Stomach (tissue), 19 donors: ENCODE measurements at regions of chr20 and their contacts with region 1.

Region 1: DNA sequence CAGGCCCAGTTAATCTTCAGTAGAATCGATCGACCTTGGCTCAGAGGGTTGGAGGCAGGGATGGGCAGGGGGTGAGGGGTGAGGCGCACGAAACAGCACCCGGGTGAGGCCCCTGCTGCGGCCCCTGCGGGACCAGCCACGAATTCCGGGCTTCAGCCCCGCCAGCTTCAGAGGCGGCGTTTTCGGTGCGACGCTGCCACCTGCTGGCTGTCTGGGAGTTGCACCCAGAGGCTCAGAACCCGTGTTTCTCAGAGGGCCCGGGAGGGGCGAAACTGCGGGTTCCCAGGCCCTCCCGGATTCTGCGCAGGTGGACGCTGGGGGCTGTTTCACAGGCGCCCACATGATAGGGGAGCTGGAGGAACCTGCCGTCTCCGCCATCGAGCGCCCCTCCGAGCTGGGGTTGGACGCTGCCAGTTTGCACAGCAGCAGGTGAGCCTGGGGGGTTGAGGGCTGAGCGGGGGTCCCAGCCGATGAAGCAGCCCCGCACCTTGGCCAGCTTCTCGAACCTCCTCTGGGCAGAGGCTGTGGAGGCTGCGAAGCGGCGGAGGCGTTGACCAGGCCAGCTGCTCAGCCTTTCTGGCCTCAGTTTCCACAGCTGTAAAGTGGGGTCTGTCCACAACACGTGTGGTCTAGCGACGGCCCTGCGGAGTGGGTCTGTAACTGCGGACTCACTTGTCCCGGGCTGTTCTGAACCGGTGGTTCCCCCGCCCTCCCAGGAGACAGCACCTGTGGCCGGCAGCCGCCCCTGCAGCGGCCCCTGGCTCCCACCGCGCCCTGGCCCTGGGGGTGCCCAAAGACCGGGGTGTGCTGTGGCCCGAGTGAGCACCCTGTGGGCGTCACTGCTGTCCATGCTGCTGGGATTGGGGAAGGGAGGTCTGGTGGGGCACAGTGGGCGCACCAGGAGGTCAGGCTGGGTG is 2.5 kb upstream of the BHLHE23 start:
- DNase-seq: peak; percentile 78 to 92
- H3K4me3 ChIP-seq: peak overlapping the region in 1 of 4 donors; percentile 31
- H3K27ac ChIP-seq: no peak overlapping the region
- H3K4me1 ChIP-seq: peaks cover 18 to 53% (median 49%) of the 10 kb centered on the region in 4 donors
- H3K27me3 ChIP-seq: peaks cover 55 to 100% (median 98%) of the 10 kb centered on the region in 3 donors
- CTCF ChIP-seq: peak in 5 of 7 experiments; percentile 86 to 95 (median 89)
- EP300 ChIP-seq: no peak
- POLR2A ChIP-seq: no peak

Region 2: GRCh38 chr20:62875419-62876361 is 133.6 kb before region 1 on chr20:
- intact Hi-C with region 1: loop called (anchors 10 kb)
- DNase-seq: peak; percentile 76 to 92
- H3K4me3 ChIP-seq: no peak overlapping the region
- H3K27ac ChIP-seq: peak overlapping the region in 4 of 5 donors; percentile 68 to 82 (median 72)
- H3K4me1 ChIP-seq: peaks cover 13 to 36% (median 28%) of the 10 kb centered on the region in 4 donors
- H3K27me3 ChIP-seq: no peaks in the 10 kb centered on the region
- CTCF ChIP-seq: peak in 4 of 7 experiments; percentile 24 to 47 (median 40)
- EP300 ChIP-seq: no peak
- POLR2A ChIP-seq: no peak

Region 3: GRCh38 chr20:62900052-62900691 is 109.1 kb before region 1 on chr20:
- intact Hi-C with region 1: loop called (anchors 10 kb)
- DNase-seq: peak; percentile 75 to 92
- H3K4me3 ChIP-seq: no peak overlapping the region
- H3K27ac ChIP-seq: peak overlapping the region; percentile 57 to 79 (median 72)
- H3K4me1 ChIP-seq: peaks cover 26 to 38% (median 36%) of the 10 kb centered on the region in 4 donors
- H3K27me3 ChIP-seq: no peaks in the 10 kb centered on the region
- CTCF ChIP-seq: peak in 5 of 7 experiments; percentile 80 to 92 (median 88)
- EP300 ChIP-seq: no peak
- POLR2A ChIP-seq: no peak

Region 4: DNA sequence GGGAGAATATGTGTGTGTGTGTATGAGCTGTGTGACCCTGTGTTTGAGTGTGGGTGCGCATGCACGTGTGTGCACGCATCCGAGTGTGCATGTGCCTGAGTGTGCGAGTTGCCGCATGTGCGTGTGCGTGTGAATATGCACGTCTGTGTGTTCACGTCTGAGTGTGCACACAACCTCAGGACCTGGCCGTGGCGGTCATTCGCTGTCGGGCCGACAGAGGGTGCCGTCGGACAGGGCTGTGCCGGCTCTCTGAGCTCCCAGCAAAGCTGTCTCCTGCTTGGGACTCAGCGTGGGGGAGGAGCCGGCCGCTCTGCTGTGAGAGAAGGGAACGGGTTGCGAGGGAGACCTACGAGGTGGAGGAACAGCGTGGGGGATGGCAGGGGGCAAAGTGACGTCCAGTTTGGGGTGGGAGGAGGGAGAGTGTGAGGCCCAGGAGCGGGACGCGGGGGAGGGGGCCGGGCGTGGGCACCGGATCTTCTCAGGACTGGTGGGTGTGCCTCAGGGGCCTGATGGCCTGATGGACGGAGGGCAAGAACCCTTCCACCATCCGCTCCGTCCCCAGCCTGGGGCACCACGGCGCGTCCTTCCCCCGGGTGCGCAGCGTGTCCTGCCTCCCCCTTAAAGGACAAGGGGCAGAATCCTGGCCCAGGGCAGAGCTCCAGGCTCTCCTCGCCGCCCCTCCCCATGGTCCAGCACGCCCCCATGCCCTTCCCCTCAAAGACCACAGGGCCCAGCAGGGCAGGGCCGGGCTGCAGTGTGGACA is 36.9 kb before region 1 on chr20:
- intact Hi-C with region 1: loop called (anchors 2 kb)
- DNase-seq: peak; percentile 90 to 95
- H3K4me3 ChIP-seq: peak overlapping the region; percentile 19 to 39 (median 30)
- H3K27ac ChIP-seq: no peak overlapping the region
- H3K4me1 ChIP-seq: peaks cover 7 to 18% (median 14%) of the 10 kb centered on the region in 4 donors
- H3K27me3 ChIP-seq: peaks cover 19 to 93% (median 69%) of the 10 kb centered on the region in 3 donors
- CTCF ChIP-seq: peak in 5 of 7 experiments; percentile 77 to 87 (median 86)
- EP300 ChIP-seq: no peak
- POLR2A ChIP-seq: no peak